CD4-positive, alpha-beta memory T cell (primary cell): ENCODE measurements at regions of chr10 and their contacts with region 1.

Region 1: DNA sequence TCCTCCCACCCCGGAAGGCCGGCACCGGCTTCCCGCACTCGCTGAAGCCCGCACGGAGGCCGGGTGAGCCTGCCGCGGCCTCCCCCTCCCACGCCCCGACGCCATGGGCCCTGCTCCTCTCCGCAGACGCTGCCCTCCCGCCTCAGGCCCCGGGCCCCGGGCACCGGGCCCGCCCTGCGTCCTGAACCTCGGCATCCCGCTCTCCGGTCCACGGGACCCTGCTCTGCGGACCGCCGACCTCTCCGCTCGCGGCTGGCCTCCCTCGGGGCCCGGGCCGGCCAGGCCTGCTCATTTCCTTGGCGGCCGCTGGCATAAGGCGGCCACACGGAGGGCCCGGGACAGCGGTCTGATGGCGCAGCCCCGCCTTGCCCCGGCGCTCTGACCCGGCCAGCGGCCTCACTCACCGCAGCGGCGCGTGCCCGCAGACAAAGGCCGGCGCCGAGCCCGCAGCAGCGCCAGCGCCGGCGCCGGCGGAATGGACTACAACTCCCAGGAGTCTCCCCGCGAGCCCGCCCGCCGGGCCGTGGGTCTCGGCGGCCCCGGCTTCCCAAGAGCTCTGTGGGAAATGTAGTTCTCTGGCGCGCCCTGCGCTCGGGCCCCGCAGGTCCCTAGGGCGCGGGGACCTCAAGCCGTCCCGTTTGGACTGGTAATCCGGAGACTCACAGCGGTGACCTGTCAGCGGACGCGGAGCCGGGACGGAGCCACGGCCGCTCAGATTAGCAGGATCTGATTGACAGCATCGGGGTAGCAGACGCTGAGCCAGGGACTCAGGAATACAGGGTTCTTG is at the start of gene ZNF32:
- DNase-seq: peak; percentile 80 to 83 (median 82)
- H3K4me3 ChIP-seq: peak within 1 kb of the TSS; percentile 66 to 78
- H3K4me3 Mint-ChIP-seq: peak within 1 kb of the TSS; percentile 93 to 98 (median 94)
- H3K27ac ChIP-seq: peak within 1 kb of the TSS; percentile 76
- H3K27ac Mint-ChIP-seq: peak within 1 kb of the TSS; percentile 84 to 96 (median 93)
- H3K4me1 ChIP-seq: peaks cover 18% of the 10 kb centered on the region
- H3K4me1 Mint-ChIP-seq: peaks cover 11 to 38% (median 18%) of the 10 kb centered on the region in 4 donors
- H3K27me3 ChIP-seq: no peaks in the 10 kb centered on the region
- H3K27me3 Mint-ChIP-seq: peaks cover 4 to 6% of the 10 kb centered on the region in 2 donors
- total RNA-seq, gene ZNF32: 35.5 to 39.5 TPM

Region 2: GRCh38 chr10:42782446-42783180 is 866.0 kb before region 1 on chr10 and contains the start of gene BMS1:
- CTCF ChIA-PET with region 1: no interaction called
- POLR2A ChIA-PET with region 1: no interaction called
- intact Hi-C with region 1: loop called (anchors 10 kb)
- DNase-seq: peak; percentile 89 to 91 (median 89)
- H3K4me3 ChIP-seq: peak within 1 kb of the TSS; percentile 47 to 88
- H3K4me3 Mint-ChIP-seq: peak within 1 kb of the TSS; percentile 96 to 99 (median 98)
- H3K27ac ChIP-seq: peak within 1 kb of the TSS; percentile 74
- H3K27ac Mint-ChIP-seq: peak within 1 kb of the TSS; percentile 93 to 99 (median 96)
- H3K4me1 ChIP-seq: peaks cover 22% of the 10 kb centered on the region
- H3K4me1 Mint-ChIP-seq: peaks cover 13 to 40% (median 29%) of the 10 kb centered on the region in 4 donors
- H3K27me3 ChIP-seq: no peaks in the 10 kb centered on the region
- H3K27me3 Mint-ChIP-seq: peaks cover 2% of the 10 kb centered on the region in 2 donors
- total RNA-seq, gene BMS1: 17.3 to 18.9 TPM

Region 3: GRCh38 chr10:43299579-43299978 is 349.0 kb before region 1 on chr10:
- CTCF ChIA-PET with region 1: no interaction called
- POLR2A ChIA-PET with region 1: no interaction called
- intact Hi-C with region 1: loop called (anchors 2 kb)
- DNase-seq: peak; percentile 59 to 75 (median 64)
- H3K4me3 ChIP-seq: peak overlapping the region in 1 of 2 donors; percentile 9
- H3K4me3 Mint-ChIP-seq: peak overlapping the region in 7 of 8 donors; percentile 4 to 81 (median 68)
- H3K27ac ChIP-seq: peak overlapping the region; percentile 48
- H3K27ac Mint-ChIP-seq: peak overlapping the region; percentile 86 to 96 (median 94)
- H3K4me1 ChIP-seq: peaks cover 66% of the 10 kb centered on the region
- H3K4me1 Mint-ChIP-seq: peaks cover 57 to 98% (median 77%) of the 10 kb centered on the region in 4 donors
- H3K27me3 ChIP-seq: no peaks in the 10 kb centered on the region
- H3K27me3 Mint-ChIP-seq: no peaks in the 10 kb centered on the region

Region 4: GRCh38 chr10:43606322-43607198 is 42.0 kb before region 1 on chr10 and contains the start of gene ZNF485:
- CTCF ChIA-PET with region 1: no interaction called
- POLR2A ChIA-PET with region 1: interaction called, 9 read pairs
- intact Hi-C with region 1: loop called (anchors 1 kb)
- DNase-seq: peak; percentile 41 to 61 (median 56)
- H3K4me3 ChIP-seq: peak within 1 kb of the TSS; percentile 58 to 59
- H3K4me3 Mint-ChIP-seq: peak within 1 kb of the TSS; percentile 81 to 88 (median 86)
- H3K27ac ChIP-seq: peak within 1 kb of the TSS; percentile 52
- H3K27ac Mint-ChIP-seq: peak within 1 kb of the TSS; percentile 70 to 95 (median 86)
- H3K4me1 ChIP-seq: peaks cover 12% of the 10 kb centered on the region
- H3K4me1 Mint-ChIP-seq: peaks cover 17 to 45% (median 30%) of the 10 kb centered on the region in 4 donors
- H3K27me3 ChIP-seq: no peaks in the 10 kb centered on the region
- H3K27me3 Mint-ChIP-seq: no peaks in the 10 kb centered on the region
- total RNA-seq, gene ZNF485: 9.0 to 10.4 TPM